ENCODE measurements at regions of chr19 and their contacts with region 1.

Region 1: GRCh38 chr19:6218491-6219162 is 61.1 kb downstream of the MLLT1 start:
- DNase-seq: peak; percentile 88 to 92
- ATAC-seq: peak; percentile 65 to 87 (median 82)
- H3K4me3 ChIP-seq: no peak overlapping the region
- H3K27ac ChIP-seq: peak overlapping the region in 4 of 10 donors; percentile 18 to 62 (median 29)
- H3K4me1 ChIP-seq: peaks cover 26 to 63% (median 54%) of the 10 kb centered on the region in 9 donors
- H3K27me3 ChIP-seq: no peaks in the 10 kb centered on the region
- CTCF ChIP-seq: peak; percentile 94 to 98 (median 97)

Region 2: DNA sequence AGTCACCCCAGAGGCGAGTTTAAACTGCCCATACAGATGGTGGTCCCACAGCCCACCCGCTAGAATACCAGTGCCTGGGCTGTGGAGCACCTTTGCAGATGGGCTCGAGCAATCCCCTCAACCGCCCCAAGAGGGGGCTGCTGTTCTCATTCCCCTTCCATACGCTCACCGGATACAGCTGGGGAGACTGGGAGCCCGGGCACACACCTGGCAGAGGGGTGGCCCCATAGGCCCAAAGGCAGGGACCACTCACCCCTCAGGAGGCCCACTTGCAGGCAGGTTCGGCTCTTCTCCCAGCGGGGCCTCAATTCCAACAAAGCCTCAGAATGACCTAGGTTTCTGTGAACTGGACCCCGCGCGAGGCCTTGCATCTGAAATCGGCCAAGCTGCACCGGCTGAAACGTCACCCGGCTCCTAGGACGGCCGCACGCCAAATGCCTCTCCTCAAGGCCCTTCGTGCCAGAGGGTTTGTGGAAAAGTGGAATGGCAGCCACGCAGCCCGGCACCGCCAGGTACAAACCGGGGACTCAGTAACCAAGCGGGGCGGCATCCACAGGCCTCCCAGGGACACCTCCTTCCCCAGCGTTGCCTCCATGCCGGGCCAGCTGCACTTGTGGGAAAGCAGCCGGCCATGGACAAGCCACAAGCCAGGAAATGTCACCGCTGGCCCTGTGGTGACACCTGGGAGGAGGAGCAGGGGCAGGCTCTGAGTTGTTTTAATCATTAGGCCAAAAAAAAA is 42.5 kb after region 1 on chr19:
- intact Hi-C with region 1: loop called in 1 of 10 experiments (anchors 5 kb)
- DNase-seq: no peak
- ATAC-seq: peak in 7 of 8 donors; percentile 38 to 64 (median 61)
- H3K4me3 ChIP-seq: no peak overlapping the region
- H3K27ac ChIP-seq: no peak overlapping the region
- H3K4me1 ChIP-seq: peaks cover 0 to 27% (median 8%) of the 10 kb centered on the region in 9 donors
- H3K27me3 ChIP-seq: no peaks in the 10 kb centered on the region
- CTCF ChIP-seq: peak; percentile 32 to 66 (median 55)

Region 3: GRCh38 chr19:6273701-6274601 is 55.3 kb after region 1 on chr19:
- intact Hi-C with region 1: loop called in 2 of 10 experiments (anchors 2 to 5 kb)
- DNase-seq: peak; percentile 78 to 80
- ATAC-seq: peak; percentile 54 to 80 (median 75)
- H3K4me3 ChIP-seq: peak overlapping the region in 6 of 10 donors; percentile 30 to 43 (median 34)
- H3K27ac ChIP-seq: peak overlapping the region; percentile 72 to 95 (median 88)
- H3K4me1 ChIP-seq: peaks cover 42 to 89% (median 87%) of the 10 kb centered on the region in 9 donors
- H3K27me3 ChIP-seq: no peaks in the 10 kb centered on the region
- CTCF ChIP-seq: no peak

Region 4: GRCh38 chr19:6279931-6280591 is 61.4 kb after region 1 on chr19 and contains the start of gene MLLT1:
- intact Hi-C with region 1: loop called in 4 of 10 experiments (anchors 5 kb)
- DNase-seq: peak; percentile 98
- ATAC-seq: peak; percentile 96 to 99 (median 98)
- H3K4me3 ChIP-seq: peak within 1 kb of the TSS; percentile 60 to 98 (median 85)
- H3K27ac ChIP-seq: peak within 1 kb of the TSS; percentile 17 to 95 (median 77)
- H3K4me1 ChIP-seq: peaks cover 9 to 47% (median 39%) of the 10 kb centered on the region in 9 donors
- H3K27me3 ChIP-seq: no peaks in the 10 kb centered on the region
- CTCF ChIP-seq: peak; percentile 65 to 91 (median 75)
- total RNA-seq, gene MLLT1: 27.6 to 48.3 (median 32.4) TPM

Region 5: GRCh38 chr19:6297202-6297601 is 78.6 kb after region 1 on chr19:
- intact Hi-C with region 1: loop called (anchors 1 to 5 kb)
- DNase-seq: no peak
- ATAC-seq: no peak
- H3K4me3 ChIP-seq: no peak overlapping the region
- H3K27ac ChIP-seq: no peak overlapping the region
- H3K4me1 ChIP-seq: no peaks in the 10 kb centered on the region
- H3K27me3 ChIP-seq: no peaks in the 10 kb centered on the region
- CTCF ChIP-seq: no peak

Region 6: GRCh38 chr19:6362027-6362350 is 143.4 kb after region 1 on chr19:
- intact Hi-C with region 1: loop called in 1 of 10 experiments (anchors 5 kb)
- DNase-seq: no peak
- ATAC-seq: peak in 4 of 8 donors; percentile 11 to 27 (median 20)
- H3K4me3 ChIP-seq: peak overlapping the region; percentile 71 to 99 (median 88)
- H3K27ac ChIP-seq: peak overlapping the region; percentile 53 to 95 (median 92)
- H3K4me1 ChIP-seq: peaks cover 0 to 14% (median 8%) of the 10 kb centered on the region in 9 donors
- H3K27me3 ChIP-seq: no peaks in the 10 kb centered on the region
- CTCF ChIP-seq: no peak

Region 7: GRCh38 chr19:6412447-6413091 is 193.9 kb after region 1 on chr19:
- intact Hi-C with region 1: loop called in 1 of 10 experiments (anchors 10 kb)
- DNase-seq: no peak
- ATAC-seq: peak in 5 of 8 donors; percentile 10 to 64 (median 42)
- H3K4me3 ChIP-seq: no peak overlapping the region
- H3K27ac ChIP-seq: peak overlapping the region in 3 of 10 donors; percentile 11 to 30 (median 21)
- H3K4me1 ChIP-seq: peaks cover 0 to 18% (median 0%) of the 10 kb centered on the region in 9 donors
- H3K27me3 ChIP-seq: no peaks in the 10 kb centered on the region
- CTCF ChIP-seq: peak in 8 of 9 donors; percentile 15 to 62 (median 54)